HepG2 (cell line): ENCODE measurements at regions of chr4 and their contacts with region 1.

Region 1: DNA sequence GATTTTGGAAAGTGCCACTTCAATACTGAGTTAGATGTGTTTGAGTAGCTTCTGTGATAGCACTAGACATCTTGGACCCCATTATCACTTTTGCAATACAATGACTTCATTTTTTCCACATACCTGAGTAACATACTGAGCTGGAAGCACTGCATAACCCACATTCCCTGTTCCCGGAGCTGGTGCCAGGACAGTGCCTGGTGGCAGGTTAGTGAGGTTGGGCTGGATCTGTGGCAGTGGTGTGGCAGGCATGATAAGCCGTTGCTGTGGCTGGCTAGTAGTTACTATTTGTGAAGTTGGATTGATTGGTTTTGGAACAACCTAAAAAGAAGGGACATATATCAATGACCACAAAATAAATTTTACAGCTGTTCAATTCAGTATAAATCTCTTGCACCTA is 38.9 kb downstream of the THAP9 start:
- DNase-seq: no peak
- ATAC-seq: no peak
- H3K4me3 ChIP-seq: no peak overlapping the region
- H3K27ac ChIP-seq: no peak overlapping the region
- H3K4me1 ChIP-seq: no peaks in the 10 kb centered on the region
- H3K27me3 ChIP-seq: no peaks in the 10 kb centered on the region
- CTCF ChIP-seq: no peak
- EP300 ChIP-seq: no peak
- POLR2A ChIP-seq: no peak
- RAD21 ChIP-seq: no peak

Region 2: DNA sequence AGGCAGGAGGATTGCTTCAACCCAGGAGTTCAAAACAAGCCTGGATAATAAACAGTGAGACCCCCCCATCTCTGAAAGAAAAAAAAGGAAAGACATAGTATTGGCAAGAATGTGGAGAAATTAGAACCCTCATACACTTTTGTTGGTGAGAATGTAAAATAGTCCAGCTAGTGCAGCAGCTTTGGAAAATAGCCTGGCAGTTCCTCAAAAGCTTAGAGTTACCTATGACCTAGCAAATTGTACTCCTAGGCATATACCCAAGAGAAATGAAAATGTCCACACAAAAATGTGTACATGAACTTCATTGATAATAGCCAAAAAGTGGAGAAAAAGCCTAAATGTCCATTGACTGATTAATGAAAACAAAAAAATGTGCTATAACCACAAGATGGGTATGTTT is 17.6 kb before region 1 on chr4:
- CTCF ChIA-PET with region 1: no interaction called
- POLR2A ChIA-PET with region 1: no interaction called
- in situ Hi-C with region 1: no loop called
- intact Hi-C with region 1: loop called (anchors 2 kb)
- DNase-seq: no peak
- ATAC-seq: peak; percentile 32; the same call in 1 of the 3 replicates
- H3K4me3 ChIP-seq: no peak overlapping the region
- H3K27ac ChIP-seq: no peak overlapping the region
- H3K4me1 ChIP-seq: no peaks in the 10 kb centered on the region
- H3K27me3 ChIP-seq: no peaks in the 10 kb centered on the region
- CTCF ChIP-seq: no peak
- EP300 ChIP-seq: no peak
- POLR2A ChIP-seq: no peak
- RAD21 ChIP-seq: no peak

Region 3: DNA sequence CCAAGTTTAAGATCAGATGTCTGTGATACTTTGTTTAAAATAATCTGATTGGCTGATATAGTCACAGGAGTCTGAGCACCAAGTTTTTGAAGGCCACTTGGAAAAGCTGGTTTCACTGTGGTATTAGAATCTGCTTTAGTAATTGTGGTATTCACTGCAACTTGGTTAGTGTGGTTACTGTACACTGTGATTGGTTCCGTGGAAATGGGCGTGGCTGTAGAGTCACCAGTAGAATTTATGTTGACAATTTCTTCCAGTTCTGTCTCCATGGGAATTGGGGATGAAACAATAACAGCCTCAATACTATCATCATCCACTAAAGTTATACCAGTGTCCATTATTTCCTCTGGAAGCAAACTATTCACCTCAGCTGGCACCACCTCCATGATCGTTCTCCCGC is 45.0 kb after region 1 on chr4:
- CTCF ChIA-PET with region 1: no interaction called
- POLR2A ChIA-PET with region 1: no interaction called
- in situ Hi-C with region 1: no loop called
- intact Hi-C with region 1: no loop called
- DNase-seq: peak; percentile 10
- ATAC-seq: no peak
- H3K4me3 ChIP-seq: no peak overlapping the region
- H3K27ac ChIP-seq: no peak overlapping the region
- H3K4me1 ChIP-seq: peaks cover 6% of the 10 kb centered on the region
- H3K27me3 ChIP-seq: no peaks in the 10 kb centered on the region
- CTCF ChIP-seq: no peak
- EP300 ChIP-seq: no peak
- POLR2A ChIP-seq: no peak
- RAD21 ChIP-seq: no peak